T-cell (primary cell): ENCODE measurements at regions of chr6 and their contacts with region 1.

Region 1: DNA sequence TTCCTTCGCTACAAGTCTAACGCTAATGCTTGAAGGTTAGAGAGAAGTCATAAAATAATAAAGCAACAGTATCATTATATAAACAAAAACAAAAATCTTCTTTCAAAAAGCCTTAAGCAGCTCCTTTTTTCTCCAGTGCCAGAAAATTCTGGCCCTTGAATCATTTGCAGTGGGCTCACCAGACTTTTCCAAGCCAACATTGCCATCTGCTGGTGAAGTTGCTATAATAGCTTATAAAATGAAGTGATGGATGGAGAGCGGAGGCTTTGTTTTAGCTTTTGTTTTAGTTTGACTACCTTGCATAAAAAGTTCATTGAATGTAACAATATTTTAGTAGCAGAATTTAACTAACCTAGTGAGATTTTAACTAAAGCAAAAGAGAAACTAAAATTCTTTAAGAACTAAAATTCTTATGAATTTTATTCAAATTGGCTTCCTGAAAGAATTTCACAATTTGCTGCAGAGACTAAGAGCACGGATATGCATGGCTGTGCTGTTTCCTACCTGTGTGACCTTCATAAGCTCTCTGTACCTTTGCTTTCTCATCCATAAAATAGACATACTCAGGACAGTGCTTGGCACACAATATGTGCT is 44.8 kb upstream of the SLC2A12 start:
- DNase-seq: peak; percentile 4 to 83 (median 49)
- ATAC-seq: no peak
- H3K4me3 ChIP-seq: no peak overlapping the region
- H3K4me3 Mint-ChIP-seq: no peak overlapping the region
- H3K27ac ChIP-seq: no peak overlapping the region
- H3K27ac Mint-ChIP-seq: no peak overlapping the region
- H3K4me1 ChIP-seq: no peaks in the 10 kb centered on the region
- H3K4me1 Mint-ChIP-seq: no peaks in the 10 kb centered on the region
- H3K27me3 ChIP-seq: peaks cover 0 to 1% of the 10 kb centered on the region in 2 experiments
- H3K27me3 Mint-ChIP-seq: peaks cover 20% of the 10 kb centered on the region in 2 donors

Region 2: GRCh38 chr6:133837801-133838349 is 259.3 kb before region 1 on chr6:
- CTCF ChIA-PET with region 1: interaction called, 5 to 16 read pairs
- POLR2A ChIA-PET with region 1: no interaction called
- DNase-seq: peak; percentile 3 to 66 (median 36)
- ATAC-seq: peak; percentile 48 to 78 (median 59)
- H3K4me3 ChIP-seq: peak overlapping the region; percentile 37 to 59
- H3K4me3 Mint-ChIP-seq: peak overlapping the region; percentile 45 to 69 (median 65)
- H3K27ac ChIP-seq: no peak overlapping the region
- H3K27ac Mint-ChIP-seq: no peak overlapping the region
- H3K4me1 ChIP-seq: peaks cover 0 to 8% of the 10 kb centered on the region in 2 experiments
- H3K4me1 Mint-ChIP-seq: peaks cover 0 to 8% (median 7%) of the 10 kb centered on the region in 3 donors
- H3K27me3 ChIP-seq: peaks cover 0 to 12% of the 10 kb centered on the region in 2 experiments
- H3K27me3 Mint-ChIP-seq: peaks cover 30 to 41% of the 10 kb centered on the region in 2 donors

Region 3: DNA sequence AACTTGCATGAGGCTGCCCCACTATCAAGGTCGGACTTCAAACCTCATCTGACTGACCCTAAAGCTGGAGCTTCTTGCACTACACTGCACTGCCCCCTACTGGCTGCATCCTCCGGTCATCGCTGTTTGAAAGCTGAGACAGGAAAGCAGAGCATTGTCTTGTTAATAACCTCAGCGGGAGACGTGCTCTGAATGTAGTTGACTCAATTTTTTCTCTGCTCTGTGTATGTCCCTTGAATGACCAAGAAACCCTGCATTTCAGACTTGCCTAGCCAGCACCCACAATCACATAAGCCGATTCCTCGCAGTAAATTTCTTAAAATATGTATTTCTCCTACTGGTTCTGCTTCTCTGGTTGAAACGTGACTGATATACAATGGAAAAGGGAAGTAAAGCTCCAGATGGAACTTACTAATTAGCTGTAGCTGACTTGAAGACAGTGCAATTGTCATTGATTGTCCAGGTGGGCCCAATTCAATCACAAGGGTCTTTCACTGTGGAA is 180.5 kb before region 1 on chr6:
- CTCF ChIA-PET with region 1: interaction called, 85 to 201 read pairs
- POLR2A ChIA-PET with region 1: no interaction called
- DNase-seq: peak in 34 of 35 experiments; percentile 11 to 76 (median 56)
- ATAC-seq: peak in 3 of 4 experiments; percentile 58 to 59 (median 58)
- H3K4me3 ChIP-seq: no peak overlapping the region
- H3K4me3 Mint-ChIP-seq: no peak overlapping the region
- H3K27ac ChIP-seq: no peak overlapping the region
- H3K27ac Mint-ChIP-seq: no peak overlapping the region
- H3K4me1 ChIP-seq: no peaks in the 10 kb centered on the region
- H3K4me1 Mint-ChIP-seq: peaks cover 4 to 5% (median 4%) of the 10 kb centered on the region in 3 donors
- H3K27me3 ChIP-seq: peaks cover 2 to 6% of the 10 kb centered on the region in 2 experiments
- H3K27me3 Mint-ChIP-seq: peaks cover 7 to 13% of the 10 kb centered on the region in 2 donors

Region 4: DNA sequence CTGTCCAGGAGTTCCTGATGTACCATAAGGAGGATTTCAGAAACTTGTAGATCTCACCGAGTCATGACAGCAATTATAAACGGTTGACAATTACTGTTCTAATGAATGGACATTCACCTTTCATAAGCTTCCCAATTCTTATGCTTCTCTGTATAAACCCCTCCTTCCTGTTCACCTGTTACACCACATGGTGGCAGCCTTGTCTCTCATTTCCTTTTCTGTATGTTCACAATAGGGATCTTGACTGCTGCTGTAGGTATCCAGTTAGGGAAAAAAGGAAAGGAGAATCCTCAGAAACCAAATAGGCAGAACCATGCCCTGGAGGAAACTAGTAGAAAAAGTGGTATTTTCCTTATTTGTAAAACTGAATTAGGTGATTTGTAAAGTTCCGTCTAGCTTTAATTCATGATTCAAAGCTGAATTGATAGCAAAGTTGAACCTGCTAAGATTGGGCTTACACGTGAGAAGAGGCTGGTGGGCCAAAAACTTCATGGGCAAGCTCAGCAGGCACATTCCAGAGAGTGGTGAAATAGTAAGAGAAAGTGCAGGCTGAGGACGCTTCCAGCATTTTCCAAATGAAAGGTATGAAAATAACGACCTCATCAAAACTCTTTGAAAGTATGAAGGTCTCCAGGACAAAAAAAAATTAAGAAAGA is 173.1 kb before region 1 on chr6:
- CTCF ChIA-PET with region 1: interaction called, 85 to 201 read pairs
- POLR2A ChIA-PET with region 1: no interaction called
- DNase-seq: peak in 33 of 35 experiments; percentile 8 to 82 (median 42)
- ATAC-seq: peak; percentile 80 to 89 (median 86)
- H3K4me3 ChIP-seq: no peak overlapping the region
- H3K4me3 Mint-ChIP-seq: no peak overlapping the region
- H3K27ac ChIP-seq: no peak overlapping the region
- H3K27ac Mint-ChIP-seq: no peak overlapping the region
- H3K4me1 ChIP-seq: no peaks in the 10 kb centered on the region
- H3K4me1 Mint-ChIP-seq: no peaks in the 10 kb centered on the region
- H3K27me3 ChIP-seq: peaks cover 6 to 19% of the 10 kb centered on the region in 2 experiments
- H3K27me3 Mint-ChIP-seq: peaks cover 20 to 40% of the 10 kb centered on the region in 2 donors

Region 5: GRCh38 chr6:133952815-133953633 is 144.2 kb before region 1 on chr6 and contains the start of gene TBPL1:
- CTCF ChIA-PET with region 1: interaction called, 3 to 12 read pairs
- POLR2A ChIA-PET with region 1: no interaction called
- DNase-seq: peak; percentile 77 to 94 (median 86)
- ATAC-seq: peak; percentile 90 to 94 (median 92)
- H3K4me3 ChIP-seq: peak within 1 kb of the TSS; percentile 79 to 86
- H3K4me3 Mint-ChIP-seq: peak within 1 kb of the TSS; percentile 86 to 98 (median 95)
- H3K27ac ChIP-seq: peak within 1 kb of the TSS; percentile 86
- H3K27ac Mint-ChIP-seq: peak within 1 kb of the TSS; percentile 89 to 92
- H3K4me1 ChIP-seq: peaks cover 17 to 21% of the 10 kb centered on the region in 2 experiments
- H3K4me1 Mint-ChIP-seq: peaks cover 45 to 50% (median 47%) of the 10 kb centered on the region in 3 donors
- H3K27me3 ChIP-seq: no peaks in the 10 kb centered on the region
- H3K27me3 Mint-ChIP-seq: no peaks in the 10 kb centered on the region
- total RNA-seq, gene TBPL1: 27.7 to 30.5 (median 28.9) TPM

Region 6: DNA sequence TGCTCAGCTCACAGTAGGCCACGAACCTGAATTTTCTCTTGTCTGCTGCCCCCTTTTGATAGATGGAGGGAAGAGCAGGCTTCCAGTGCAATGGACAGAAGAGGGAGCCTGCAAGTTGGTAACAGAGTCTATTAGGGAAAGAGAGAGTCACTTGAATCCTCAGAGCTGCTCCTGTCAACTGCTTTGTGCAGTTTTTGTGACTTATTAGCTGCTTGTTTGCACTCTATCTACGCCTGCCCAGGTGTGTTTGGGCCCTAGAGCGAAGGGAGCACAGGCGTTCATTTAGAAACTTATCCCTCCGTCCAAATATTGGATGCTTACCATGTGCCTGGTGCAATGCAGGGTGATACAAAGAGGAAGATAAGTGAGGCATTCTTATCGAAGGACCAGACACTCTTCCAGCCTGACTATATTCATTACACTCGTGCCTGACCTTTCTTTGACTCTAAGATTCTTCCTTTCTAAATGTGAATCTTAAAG is 33.2 kb before region 1 on chr6:
- CTCF ChIA-PET with region 1: interaction called, 9 to 12 read pairs
- POLR2A ChIA-PET with region 1: no interaction called
- DNase-seq: peak in 34 of 35 experiments; percentile 10 to 74 (median 42)
- ATAC-seq: peak; percentile 88 to 90 (median 90)
- H3K4me3 ChIP-seq: no peak overlapping the region
- H3K4me3 Mint-ChIP-seq: no peak overlapping the region
- H3K27ac ChIP-seq: no peak overlapping the region
- H3K27ac Mint-ChIP-seq: no peak overlapping the region
- H3K4me1 ChIP-seq: no peaks in the 10 kb centered on the region
- H3K4me1 Mint-ChIP-seq: peaks cover 0 to 1% (median 0%) of the 10 kb centered on the region in 3 donors
- H3K27me3 ChIP-seq: no peaks in the 10 kb centered on the region
- H3K27me3 Mint-ChIP-seq: peaks cover 0 to 10% of the 10 kb centered on the region in 2 donors

Region 7: GRCh38 chr6:134123666-134124208 is 26.5 kb after region 1 on chr6:
- CTCF ChIA-PET with region 1: interaction called, 6 to 10 read pairs
- POLR2A ChIA-PET with region 1: no interaction called
- DNase-seq: peak in 25 of 35 experiments; percentile 2 to 72 (median 32)
- ATAC-seq: peak; percentile 59 to 98 (median 88)
- H3K4me3 ChIP-seq: no peak overlapping the region
- H3K4me3 Mint-ChIP-seq: no peak overlapping the region
- H3K27ac ChIP-seq: no peak overlapping the region
- H3K27ac Mint-ChIP-seq: peak overlapping the region in 1 of 2 donors; percentile 66
- H3K4me1 ChIP-seq: no peaks in the 10 kb centered on the region
- H3K4me1 Mint-ChIP-seq: peaks cover 0 to 3% (median 3%) of the 10 kb centered on the region in 3 donors
- H3K27me3 ChIP-seq: peaks cover 0 to 4% of the 10 kb centered on the region in 2 experiments
- H3K27me3 Mint-ChIP-seq: peaks cover 0 to 3% of the 10 kb centered on the region in 2 donors

Region 8: GRCh38 chr6:134182528-134182927 is 85.3 kb after region 1 on chr6:
- CTCF ChIA-PET with region 1: no interaction called
- POLR2A ChIA-PET with region 1: no interaction called
- DNase-seq: no peak
- ATAC-seq: no peak
- H3K4me3 ChIP-seq: no peak overlapping the region
- H3K4me3 Mint-ChIP-seq: no peak overlapping the region
- H3K27ac ChIP-seq: no peak overlapping the region
- H3K27ac Mint-ChIP-seq: no peak overlapping the region
- H3K4me1 ChIP-seq: peaks cover 12 to 25% of the 10 kb centered on the region in 2 experiments
- H3K4me1 Mint-ChIP-seq: peaks cover 25 to 42% (median 26%) of the 10 kb centered on the region in 3 donors
- H3K27me3 ChIP-seq: no peaks in the 10 kb centered on the region
- H3K27me3 Mint-ChIP-seq: no peaks in the 10 kb centered on the region

Region 9: DNA sequence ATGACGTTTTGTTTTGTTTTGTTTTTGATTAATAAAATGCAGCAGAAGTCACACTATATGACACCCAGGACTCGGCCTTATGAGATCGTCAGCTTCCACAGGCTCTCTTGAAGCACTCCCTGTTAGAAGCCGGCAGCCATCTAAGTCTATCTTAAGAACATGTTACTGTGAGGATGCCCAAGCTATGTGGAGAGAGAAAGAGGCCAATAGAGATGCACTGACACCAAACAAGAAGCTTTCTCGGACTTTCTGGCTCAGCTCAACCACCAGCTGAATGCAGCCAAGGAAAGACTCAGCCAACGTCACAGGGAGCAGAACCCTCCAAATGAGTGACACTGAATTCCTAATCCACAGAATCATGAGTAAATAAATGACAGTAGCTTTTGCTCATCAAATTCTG is 206.7 kb after region 1 on chr6:
- CTCF ChIA-PET with region 1: no interaction called
- POLR2A ChIA-PET with region 1: no interaction called
- DNase-seq: no peak
- ATAC-seq: no peak
- H3K4me3 ChIP-seq: no peak overlapping the region
- H3K4me3 Mint-ChIP-seq: no peak overlapping the region
- H3K27ac ChIP-seq: no peak overlapping the region
- H3K27ac Mint-ChIP-seq: no peak overlapping the region
- H3K4me1 ChIP-seq: peaks cover 0 to 2% of the 10 kb centered on the region in 2 experiments
- H3K4me1 Mint-ChIP-seq: peaks cover 7 to 18% (median 13%) of the 10 kb centered on the region in 3 donors
- H3K27me3 ChIP-seq: no peaks in the 10 kb centered on the region
- H3K27me3 Mint-ChIP-seq: peaks cover 0 to 1% of the 10 kb centered on the region in 2 donors

Region 10: DNA sequence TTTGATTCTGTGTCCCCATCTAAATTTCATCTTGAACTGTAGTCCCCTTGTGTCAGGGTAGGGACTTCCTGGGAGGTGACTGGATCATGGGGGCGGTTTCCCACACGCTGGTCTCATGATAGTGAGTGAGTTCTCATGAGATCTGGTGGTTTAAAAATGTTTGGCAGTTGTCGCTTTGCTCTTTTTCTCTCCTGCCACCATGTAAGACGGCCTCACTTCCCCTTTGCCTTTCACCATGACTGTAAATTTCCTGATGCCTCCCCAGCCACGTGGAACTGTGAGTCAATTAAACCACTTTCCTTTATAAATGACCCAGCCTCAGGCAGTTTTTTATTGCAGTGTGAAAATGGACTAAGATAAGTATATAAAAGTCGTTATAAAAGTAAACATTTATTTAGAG is 301.2 kb after region 1 on chr6:
- CTCF ChIA-PET with region 1: no interaction called
- POLR2A ChIA-PET with region 1: no interaction called
- DNase-seq: no peak
- ATAC-seq: no peak
- H3K4me3 ChIP-seq: no peak overlapping the region
- H3K4me3 Mint-ChIP-seq: no peak overlapping the region
- H3K27ac ChIP-seq: no peak overlapping the region
- H3K27ac Mint-ChIP-seq: no peak overlapping the region
- H3K4me1 ChIP-seq: peaks cover 0 to 2% of the 10 kb centered on the region in 2 experiments
- H3K4me1 Mint-ChIP-seq: peaks cover 5 to 31% (median 6%) of the 10 kb centered on the region in 3 donors
- H3K27me3 ChIP-seq: no peaks in the 10 kb centered on the region
- H3K27me3 Mint-ChIP-seq: peaks cover 0 to 4% of the 10 kb centered on the region in 2 donors